ENCODE measurements at regions of chr11 and their contacts with region 1.

Region 1: GRCh38 chr11:13335319-13335718 is 57.7 kb downstream of the BMAL1 start:
- DNase-seq: peak; percentile 50 to 80 (median 59)
- H3K4me3 ChIP-seq: no peak overlapping the region
- H3K4me3 Mint-ChIP-seq: no peak overlapping the region
- H3K27ac ChIP-seq: no peak overlapping the region
- H3K27ac Mint-ChIP-seq: peak overlapping the region in 4 of 8 donors; percentile 13 to 86 (median 54)
- H3K4me1 ChIP-seq: peaks cover 44% of the 10 kb centered on the region
- H3K4me1 Mint-ChIP-seq: peaks cover 77 to 91% (median 84%) of the 10 kb centered on the region in 3 donors
- H3K27me3 ChIP-seq: no peaks in the 10 kb centered on the region
- H3K27me3 Mint-ChIP-seq: no peaks in the 10 kb centered on the region

Region 2: DNA sequence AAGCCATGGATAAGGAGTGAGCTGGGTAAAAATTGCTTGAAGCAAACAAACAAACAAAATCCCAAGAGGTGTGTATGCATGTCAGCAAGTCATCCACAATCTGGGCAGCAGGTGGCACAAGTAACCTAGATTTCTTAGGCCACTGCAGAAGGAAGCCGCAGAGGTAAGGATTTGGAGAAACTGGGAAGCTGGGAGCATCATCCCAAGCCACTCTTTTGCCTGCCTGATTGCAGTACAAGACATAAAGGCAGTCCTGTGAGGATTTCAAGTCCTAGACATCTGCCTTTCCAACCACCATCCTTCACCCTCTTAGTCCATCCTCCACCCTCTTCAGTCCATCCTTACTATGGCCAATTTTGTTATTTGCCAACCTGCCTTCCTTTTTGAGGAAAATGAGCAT is 124.9 kb before region 1 on chr11:
- CTCF ChIA-PET with region 1: interaction called, 11 read pairs
- POLR2A ChIA-PET with region 1: no interaction called
- DNase-seq: no peak
- H3K4me3 ChIP-seq: no peak overlapping the region
- H3K4me3 Mint-ChIP-seq: no peak overlapping the region
- H3K27ac ChIP-seq: no peak overlapping the region
- H3K27ac Mint-ChIP-seq: no peak overlapping the region
- H3K4me1 ChIP-seq: peaks cover 10% of the 10 kb centered on the region
- H3K4me1 Mint-ChIP-seq: peaks cover 13 to 32% (median 24%) of the 10 kb centered on the region in 3 donors
- H3K27me3 ChIP-seq: no peaks in the 10 kb centered on the region
- H3K27me3 Mint-ChIP-seq: peaks cover 0 to 3% of the 10 kb centered on the region in 2 donors

Region 3: DNA sequence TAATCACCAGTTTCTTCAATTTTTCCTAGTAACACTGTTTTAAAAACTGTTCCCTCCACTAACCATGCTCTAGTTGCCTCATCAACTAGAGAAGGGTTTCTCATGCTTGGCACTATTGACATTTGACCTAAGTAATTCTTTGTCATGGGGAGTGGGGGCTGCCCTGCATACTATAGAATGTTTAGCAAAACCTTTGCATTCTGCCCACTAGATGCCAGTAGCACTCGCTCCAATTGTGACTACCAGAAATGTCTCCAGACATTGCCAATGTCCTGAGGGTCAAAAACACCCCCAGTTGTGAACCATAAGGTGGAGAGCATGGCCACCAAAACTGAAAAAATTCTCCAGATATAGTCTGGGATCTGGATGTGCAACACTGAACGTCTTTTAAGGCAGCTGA is 85.3 kb before region 1 on chr11:
- CTCF ChIA-PET with region 1: interaction called, 13 read pairs
- POLR2A ChIA-PET with region 1: no interaction called
- DNase-seq: no peak
- H3K4me3 ChIP-seq: no peak overlapping the region
- H3K4me3 Mint-ChIP-seq: no peak overlapping the region
- H3K27ac ChIP-seq: no peak overlapping the region
- H3K27ac Mint-ChIP-seq: no peak overlapping the region
- H3K4me1 ChIP-seq: no peaks in the 10 kb centered on the region
- H3K4me1 Mint-ChIP-seq: no peaks in the 10 kb centered on the region
- H3K27me3 ChIP-seq: peaks cover 5% of the 10 kb centered on the region
- H3K27me3 Mint-ChIP-seq: peaks cover 6 to 23% of the 10 kb centered on the region in 2 donors

Region 4: GRCh38 chr11:13277768-13278613 is 57.3 kb before region 1 on chr11 and contains the start of gene BMAL1:
- CTCF ChIA-PET with region 1: interaction called, 22 read pairs
- POLR2A ChIA-PET with region 1: interaction called, 8 read pairs
- DNase-seq: peak in 4 of 5 donors; percentile 47 to 74 (median 65)
- H3K4me3 ChIP-seq: peak within 1 kb of the TSS; percentile 98
- H3K4me3 Mint-ChIP-seq: peak within 1 kb of the TSS; percentile 92 to 99 (median 97)
- H3K27ac ChIP-seq: peak within 1 kb of the TSS; percentile 76
- H3K27ac Mint-ChIP-seq: peak within 1 kb of the TSS; percentile 81 to 98 (median 95)
- H3K4me1 ChIP-seq: peaks cover 44% of the 10 kb centered on the region
- H3K4me1 Mint-ChIP-seq: peaks cover 52 to 53% (median 52%) of the 10 kb centered on the region in 3 donors
- H3K27me3 ChIP-seq: no peaks in the 10 kb centered on the region
- H3K27me3 Mint-ChIP-seq: peaks cover 0 to 12% of the 10 kb centered on the region in 2 donors
- total RNA-seq, gene BMAL1: 25.2 to 29.4 TPM

Region 5: DNA sequence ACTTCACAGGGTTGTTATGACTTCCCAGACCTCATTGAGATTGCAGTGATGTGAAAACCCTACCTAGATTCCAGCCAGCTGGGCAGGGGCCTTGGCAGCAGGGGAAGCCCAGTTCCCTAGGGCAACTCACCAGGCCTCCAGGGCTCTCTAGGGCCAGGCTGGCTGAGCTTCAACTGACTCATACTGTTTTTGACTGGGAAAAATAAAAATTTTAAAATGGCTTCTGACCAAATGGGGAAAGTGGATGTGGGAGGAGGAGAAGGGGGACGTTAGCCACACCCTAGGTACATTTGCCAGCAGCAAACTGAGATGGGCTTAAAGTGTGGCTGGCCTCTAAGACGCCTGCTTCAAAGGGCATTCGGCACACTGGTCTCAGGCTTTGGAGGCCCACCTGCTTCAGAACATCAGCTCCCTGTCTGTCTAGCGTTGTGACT is 18.8 kb before region 1 on chr11:
- CTCF ChIA-PET with region 1: interaction called, 14 read pairs
- POLR2A ChIA-PET with region 1: no interaction called
- DNase-seq: no peak
- H3K4me3 ChIP-seq: no peak overlapping the region
- H3K4me3 Mint-ChIP-seq: peak overlapping the region in 3 of 7 donors; percentile 5 to 52 (median 37)
- H3K27ac ChIP-seq: no peak overlapping the region
- H3K27ac Mint-ChIP-seq: peak overlapping the region; percentile 25 to 87 (median 41)
- H3K4me1 ChIP-seq: peaks cover 62% of the 10 kb centered on the region
- H3K4me1 Mint-ChIP-seq: peaks cover 20 to 98% (median 89%) of the 10 kb centered on the region in 3 donors
- H3K27me3 ChIP-seq: no peaks in the 10 kb centered on the region
- H3K27me3 Mint-ChIP-seq: no peaks in the 10 kb centered on the region